ENCODE measurements at regions of chr12 and their contacts with region 1.

Region 1: DNA sequence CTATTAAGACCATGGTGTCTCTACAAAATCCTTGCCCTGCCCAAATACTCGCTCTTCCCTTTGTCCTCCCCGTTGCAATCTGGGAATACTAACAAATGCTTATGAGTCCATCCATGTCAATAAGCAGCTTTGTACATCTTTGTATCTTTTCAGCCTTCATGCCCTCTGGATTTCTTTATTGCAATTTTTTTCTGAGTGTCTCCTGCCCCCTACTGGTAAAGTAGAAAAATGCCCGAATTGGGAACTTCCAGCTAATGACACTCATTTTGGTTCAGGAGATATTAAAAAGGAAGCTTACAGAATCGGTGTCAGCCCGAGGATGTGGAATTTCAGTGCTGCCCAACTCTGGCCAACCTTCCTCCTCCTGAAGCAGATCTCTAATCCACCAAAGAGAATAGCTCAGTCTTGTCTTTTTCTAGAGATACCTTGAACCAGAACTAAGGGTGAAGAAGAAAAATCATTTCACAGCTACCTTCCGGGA is 46.0 kb downstream of the SH2B3 start:
- DNase-seq: peak; percentile 45 to 77 (median 76)
- H3K4me3 ChIP-seq: no peak overlapping the region
- H3K4me3 Mint-ChIP-seq: peak overlapping the region in 1 of 8 donors; percentile 35
- H3K27ac ChIP-seq: peak overlapping the region; percentile 19
- H3K27ac Mint-ChIP-seq: peak overlapping the region; percentile 4 to 87 (median 71)
- H3K4me1 ChIP-seq: peaks cover 39% of the 10 kb centered on the region
- H3K4me1 Mint-ChIP-seq: peaks cover 20 to 60% (median 41%) of the 10 kb centered on the region in 4 donors
- H3K27me3 ChIP-seq: no peaks in the 10 kb centered on the region
- H3K27me3 Mint-ChIP-seq: no peaks in the 10 kb centered on the region

Region 2: DNA sequence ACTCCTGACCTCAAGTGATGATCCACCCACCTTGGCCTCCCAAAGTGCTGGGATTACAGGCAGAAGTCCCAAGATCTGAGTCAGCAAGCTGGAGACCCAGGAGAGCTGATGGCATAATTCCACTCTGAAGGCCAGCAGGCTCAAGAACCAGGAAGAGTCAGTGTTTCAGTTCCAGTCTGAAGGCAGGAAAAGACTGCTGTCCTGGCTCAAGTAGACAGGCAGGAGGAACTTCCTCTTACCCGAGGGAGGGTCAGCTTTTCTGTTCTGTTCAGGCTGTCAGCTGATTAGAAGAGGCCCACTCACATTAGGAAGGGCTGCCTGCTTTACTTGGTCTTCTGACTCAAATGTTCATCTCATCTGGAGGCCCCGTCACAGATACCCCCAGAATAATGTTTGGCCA is 325.4 kb before region 1 on chr12:
- CTCF ChIA-PET with region 1: no interaction called
- POLR2A ChIA-PET with region 1: no interaction called
- intact Hi-C with region 1: no loop called
- DNase-seq: no peak
- H3K4me3 ChIP-seq: no peak overlapping the region
- H3K4me3 Mint-ChIP-seq: no peak overlapping the region
- H3K27ac ChIP-seq: no peak overlapping the region
- H3K27ac Mint-ChIP-seq: no peak overlapping the region
- H3K4me1 ChIP-seq: no peaks in the 10 kb centered on the region
- H3K4me1 Mint-ChIP-seq: no peaks in the 10 kb centered on the region
- H3K27me3 ChIP-seq: no peaks in the 10 kb centered on the region
- H3K27me3 Mint-ChIP-seq: peaks cover 1 to 5% of the 10 kb centered on the region in 2 donors

Region 3: DNA sequence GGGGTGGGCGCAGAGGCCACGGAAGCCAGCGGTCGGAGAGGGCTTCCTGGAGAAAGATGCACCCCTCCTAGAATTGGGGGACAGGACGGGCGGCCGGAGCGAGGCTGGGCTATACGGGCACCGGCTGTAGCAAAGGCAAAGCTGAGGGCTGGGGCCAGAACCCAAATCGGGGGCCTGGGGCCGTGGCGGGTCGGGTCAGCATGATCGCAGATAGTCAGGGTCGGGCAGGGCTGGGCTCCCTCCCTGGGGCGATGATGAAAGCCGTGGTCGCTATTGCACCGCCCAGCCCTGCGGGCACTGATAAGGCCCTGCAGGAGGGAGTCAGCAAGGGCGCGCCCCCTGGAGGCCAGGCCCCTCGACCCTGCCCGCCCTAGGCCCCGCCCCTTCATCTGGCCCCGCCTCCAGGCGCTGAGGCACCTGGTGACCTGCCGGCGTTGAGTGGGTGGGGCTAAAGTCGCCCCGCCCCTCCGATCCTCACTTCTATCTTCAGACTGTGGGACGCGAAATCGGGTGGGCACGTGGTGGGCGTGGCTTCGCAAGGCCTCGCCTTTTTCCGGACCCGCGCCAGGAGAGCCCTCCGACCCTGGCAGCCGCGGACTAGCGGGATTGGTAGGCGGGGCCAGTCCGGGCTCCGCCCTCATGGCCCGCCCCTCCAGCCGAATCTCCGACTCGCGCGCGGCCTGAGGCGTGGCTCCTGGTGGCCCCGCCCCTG is 46.4 kb before region 1 on chr12:
- CTCF ChIA-PET with region 1: interaction called, 1,282 read pairs
- POLR2A ChIA-PET with region 1: interaction called, 683 read pairs
- intact Hi-C with region 1: loop called (anchors 1 kb)
- DNase-seq: peak; percentile 97 to 98 (median 98)
- H3K4me3 ChIP-seq: peak overlapping the region; percentile 29 to 90
- H3K4me3 Mint-ChIP-seq: peak overlapping the region; percentile 86 to 95 (median 90)
- H3K27ac ChIP-seq: peak overlapping the region; percentile 97
- H3K27ac Mint-ChIP-seq: peak overlapping the region; percentile 92 to 98 (median 95)
- H3K4me1 ChIP-seq: peaks cover 61% of the 10 kb centered on the region
- H3K4me1 Mint-ChIP-seq: peaks cover 35 to 74% (median 52%) of the 10 kb centered on the region in 4 donors
- H3K27me3 ChIP-seq: no peaks in the 10 kb centered on the region
- H3K27me3 Mint-ChIP-seq: no peaks in the 10 kb centered on the region

Region 4: GRCh38 chr12:111434680-111435338 is 16.9 kb before region 1 on chr12:
- CTCF ChIA-PET with region 1: interaction called, 99 read pairs
- POLR2A ChIA-PET with region 1: interaction called, 192 read pairs
- intact Hi-C with region 1: loop called (anchors 1 kb)
- DNase-seq: peak; percentile 90 to 97 (median 92)
- H3K4me3 ChIP-seq: peak overlapping the region in 1 of 2 donors; percentile 38
- H3K4me3 Mint-ChIP-seq: peak overlapping the region; percentile 86 to 91 (median 88)
- H3K27ac ChIP-seq: peak overlapping the region; percentile 98
- H3K27ac Mint-ChIP-seq: peak overlapping the region; percentile 98 to 100 (median 99)
- H3K4me1 ChIP-seq: peaks cover 95% of the 10 kb centered on the region
- H3K4me1 Mint-ChIP-seq: peaks cover 66 to 96% (median 82%) of the 10 kb centered on the region in 4 donors
- H3K27me3 ChIP-seq: no peaks in the 10 kb centered on the region
- H3K27me3 Mint-ChIP-seq: no peaks in the 10 kb centered on the region

Region 5: GRCh38 chr12:111467857-111468241 is 16.2 kb after region 1 on chr12:
- CTCF ChIA-PET with region 1: interaction called, 29 read pairs
- POLR2A ChIA-PET with region 1: interaction called, 4 read pairs
- intact Hi-C with region 1: no loop called
- DNase-seq: no peak
- H3K4me3 ChIP-seq: no peak overlapping the region
- H3K4me3 Mint-ChIP-seq: no peak overlapping the region
- H3K27ac ChIP-seq: no peak overlapping the region
- H3K27ac Mint-ChIP-seq: peak overlapping the region in 2 of 7 donors; percentile 2 to 29
- H3K4me1 ChIP-seq: no peaks in the 10 kb centered on the region
- H3K4me1 Mint-ChIP-seq: peaks cover 0 to 8% (median 2%) of the 10 kb centered on the region in 4 donors
- H3K27me3 ChIP-seq: no peaks in the 10 kb centered on the region
- H3K27me3 Mint-ChIP-seq: no peaks in the 10 kb centered on the region

Region 6: DNA sequence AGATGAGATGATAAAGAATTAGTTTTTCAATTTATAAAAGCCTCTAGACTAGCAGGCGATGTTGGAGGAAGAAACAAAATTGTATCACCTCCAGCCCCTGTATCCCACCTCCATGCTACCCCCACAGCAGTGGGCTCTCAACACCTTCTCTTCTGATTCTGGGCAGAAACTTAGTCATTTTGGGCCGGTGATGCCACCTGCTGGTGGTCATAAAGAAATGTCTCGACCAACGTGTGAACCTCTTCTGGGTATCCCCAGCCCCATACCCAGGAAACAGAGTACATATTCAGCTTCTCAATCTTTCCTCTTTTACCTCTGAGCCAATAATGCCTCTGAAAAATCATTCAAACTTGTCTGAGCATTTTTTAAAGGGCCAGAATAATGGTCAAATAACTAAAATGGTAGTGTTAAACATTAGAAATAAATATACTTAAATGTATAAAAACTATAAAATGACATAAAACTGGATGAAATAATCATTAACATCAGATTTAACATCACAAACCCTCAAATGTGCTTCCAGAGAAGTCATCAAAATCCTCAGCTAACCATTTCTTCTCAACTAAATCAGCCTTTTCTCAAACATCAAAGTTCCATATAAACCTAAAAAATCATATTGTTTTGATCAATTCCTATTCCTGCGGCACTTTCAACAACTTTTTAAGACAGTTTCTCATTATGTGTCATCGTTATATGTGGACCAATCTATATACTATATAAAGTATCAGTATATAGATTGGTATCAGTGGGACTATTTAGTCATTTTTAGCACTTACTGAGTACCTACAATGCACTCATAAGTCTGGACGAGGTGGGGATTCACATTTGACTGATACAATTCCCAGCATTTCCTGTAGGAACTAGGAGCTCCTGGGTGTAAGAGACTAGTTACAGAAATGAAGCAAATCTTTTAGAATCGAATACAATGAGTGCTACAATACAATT is 78.0 kb after region 1 on chr12:
- CTCF ChIA-PET with region 1: interaction called, 36 read pairs
- POLR2A ChIA-PET with region 1: no interaction called
- intact Hi-C with region 1: loop called (anchors 1 kb)
- DNase-seq: peak; percentile 59 to 67 (median 61)
- H3K4me3 ChIP-seq: no peak overlapping the region
- H3K4me3 Mint-ChIP-seq: no peak overlapping the region
- H3K27ac ChIP-seq: no peak overlapping the region
- H3K27ac Mint-ChIP-seq: peak overlapping the region in 1 of 7 donors; percentile 19
- H3K4me1 ChIP-seq: no peaks in the 10 kb centered on the region
- H3K4me1 Mint-ChIP-seq: peaks cover 0 to 3% (median 1%) of the 10 kb centered on the region in 4 donors
- H3K27me3 ChIP-seq: no peaks in the 10 kb centered on the region
- H3K27me3 Mint-ChIP-seq: no peaks in the 10 kb centered on the region

Measured in CD4-positive, alpha-beta memory T cell (primary cell).